ENCODE measurements at regions of chr19 and their contacts with region 1.

Region 1: GRCh38 chr19:7376151-7376852 is 27.6 kb downstream of the ARHGEF18 start:
- DNase-seq: no peak
- ATAC-seq: no peak
- H3K4me3 ChIP-seq: no peak overlapping the region
- H3K27ac ChIP-seq: no peak overlapping the region
- H3K4me1 ChIP-seq: peaks cover 0 to 8% of the 10 kb centered on the region in 2 experiments; a peak in 1 of 5 replicates
- H3K27me3 ChIP-seq: peaks cover 20 to 54% of the 10 kb centered on the region in 2 experiments
- CTCF ChIP-seq: no peak
- EP300 ChIP-seq: no peak
- POLR2A ChIP-seq: no peak
- RAD21 ChIP-seq: no peak

Region 2: DNA sequence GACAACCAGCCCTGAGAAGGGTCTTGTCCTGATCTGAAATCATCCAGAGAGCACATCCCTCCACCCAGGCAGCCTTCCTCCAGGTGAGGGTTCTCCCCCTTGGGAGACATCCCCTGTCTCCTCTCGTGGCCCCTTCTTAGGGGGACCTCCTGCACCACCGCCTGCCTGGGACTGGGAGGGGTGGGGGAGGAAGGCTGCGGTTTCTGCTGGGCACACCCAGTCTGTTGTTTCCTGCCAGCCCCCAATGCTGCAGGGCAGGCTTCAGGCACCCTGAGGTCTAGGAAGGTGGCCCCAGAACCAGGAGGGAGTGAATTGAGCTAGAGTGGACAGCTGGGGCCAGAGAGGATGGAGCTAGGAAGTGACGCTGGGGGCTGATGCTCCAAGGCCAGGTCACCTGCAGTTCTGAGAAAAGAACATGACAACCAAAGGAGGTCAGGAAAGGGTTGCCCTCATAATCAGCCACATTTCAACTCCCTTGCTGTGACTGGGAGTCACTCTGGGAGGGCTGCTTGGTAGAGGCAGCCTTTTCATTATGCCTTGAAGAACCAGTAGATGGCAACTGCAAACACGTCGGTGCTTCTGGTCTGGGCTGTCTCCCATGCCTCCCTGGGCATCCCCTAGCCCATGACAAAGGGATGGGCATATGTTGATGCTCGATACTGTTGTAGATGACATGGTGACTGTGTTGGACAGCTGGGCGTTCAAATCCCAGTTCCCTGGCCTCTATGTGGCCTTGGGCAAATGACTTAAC is 26.2 kb before region 1 on chr19:
- CTCF ChIA-PET with region 1: interaction called, 6 read pairs
- POLR2A ChIA-PET with region 1: no interaction called
- in situ Hi-C with region 1: no loop called
- intact Hi-C with region 1: loop called (anchors 1 kb)
- DNase-seq: no peak
- ATAC-seq: no peak
- H3K4me3 ChIP-seq: no peak overlapping the region
- H3K27ac ChIP-seq: no peak overlapping the region
- H3K4me1 ChIP-seq: no peaks in the 10 kb centered on the region
- H3K27me3 ChIP-seq: peaks cover 6 to 36% of the 10 kb centered on the region in 2 experiments; a peak in 3 of 5 replicates
- CTCF ChIP-seq: no peak
- EP300 ChIP-seq: no peak
- POLR2A ChIP-seq: no peak
- RAD21 ChIP-seq: no peak

Region 3: GRCh38 chr19:7506385-7507328 is 130.4 kb after region 1 on chr19:
- CTCF ChIA-PET with region 1: no interaction called
- POLR2A ChIA-PET with region 1: no interaction called
- in situ Hi-C with region 1: no loop called
- intact Hi-C with region 1: no loop called
- DNase-seq: peak; percentile 82 to 97 (median 88)
- ATAC-seq: peak; percentile 92
- H3K4me3 ChIP-seq: peak overlapping the region; percentile 51
- H3K27ac ChIP-seq: peak overlapping the region; percentile 8; the same call in 2 of the 3 replicates
- H3K4me1 ChIP-seq: peaks cover 18 to 39% of the 10 kb centered on the region in 2 experiments; a peak in 4 of 5 replicates
- H3K27me3 ChIP-seq: no peaks in the 10 kb centered on the region
- CTCF ChIP-seq: no peak
- EP300 ChIP-seq: no peak
- POLR2A ChIP-seq: no peak
- RAD21 ChIP-seq: no peak